ENCODE measurements at regions of chr1 and their contacts with region 1.

Region 1: DNA sequence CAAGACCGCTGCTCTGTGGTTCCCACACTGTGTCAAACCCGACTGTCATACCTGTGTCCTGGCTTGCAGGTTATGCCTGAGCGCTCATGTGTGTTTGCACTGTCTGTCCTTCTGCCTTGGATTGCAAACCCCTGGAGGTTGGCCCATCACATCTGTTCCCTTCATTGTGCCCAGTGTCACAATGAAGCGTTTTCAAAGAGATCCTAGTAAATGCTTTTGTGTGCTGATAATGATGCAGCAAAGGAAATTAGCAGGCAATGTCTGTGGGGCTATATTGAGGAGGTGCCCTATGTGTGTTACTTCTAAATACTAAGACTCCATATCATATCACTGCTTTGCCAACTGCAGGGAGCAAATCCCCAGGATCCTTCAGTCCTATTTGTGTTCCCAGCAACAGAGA is 424.4 kb upstream of the NFIA start:
- DNase-seq: peak in 2 of 10 donors; percentile 12 to 48
- H3K4me3 ChIP-seq: no peak overlapping the region
- H3K27ac ChIP-seq: peak overlapping the region in 12 of 59 donors; percentile 2 to 83 (median 38)
- H3K27me3 ChIP-seq: no peaks in the 10 kb centered on the region
- CTCF ChIP-seq: no peak

Region 2: GRCh38 chr1:60564916-60565750 is 92.8 kb before region 1 on chr1:
- intact Hi-C with region 1: loop called in 1 of 2 experiments (anchors 5 kb)
- DNase-seq: no peak
- H3K4me3 ChIP-seq: no peak overlapping the region
- H3K27ac ChIP-seq: no peak overlapping the region
- H3K27me3 ChIP-seq: no peaks in the 10 kb centered on the region
- CTCF ChIP-seq: peak in 9 of 56 donors; percentile 7 to 30 (median 17)

Region 3: GRCh38 chr1:60612790-60613189 is 45.1 kb before region 1 on chr1:
- intact Hi-C with region 1: no loop called
- DNase-seq: no peak
- H3K4me3 ChIP-seq: no peak overlapping the region
- H3K27ac ChIP-seq: no peak overlapping the region
- H3K27me3 ChIP-seq: no peaks in the 10 kb centered on the region
- CTCF ChIP-seq: no peak

Measured in dorsolateral prefrontal cortex (tissue), 120 donors.